BJ (cell line): ENCODE measurements at regions of chr10 and their contacts with region 1.

Region 1: GRCh38 chr10:91652364-91652763 is 19.5 kb upstream of the PPP1R3C start:
- DNase-seq: peak; percentile 97
- H3K4me3 ChIP-seq: no peak overlapping the region
- H3K27me3 ChIP-seq: no peaks in the 10 kb centered on the region
- CTCF ChIP-seq: no peak

Region 2: GRCh38 chr10:92750791-92751533 is 1098.6 kb after region 1 on chr10:
- CTCF ChIA-PET with region 1: no interaction called
- POLR2A ChIA-PET with region 1: interaction called, 11 read pairs
- DNase-seq: peak; percentile 73
- H3K4me3 ChIP-seq: no peak overlapping the region
- H3K27me3 ChIP-seq: no peaks in the 10 kb centered on the region
- CTCF ChIP-seq: no peak